WTC11 (cell line): ENCODE measurements at regions of chr3 and their contacts with region 1.

Region 1: DNA sequence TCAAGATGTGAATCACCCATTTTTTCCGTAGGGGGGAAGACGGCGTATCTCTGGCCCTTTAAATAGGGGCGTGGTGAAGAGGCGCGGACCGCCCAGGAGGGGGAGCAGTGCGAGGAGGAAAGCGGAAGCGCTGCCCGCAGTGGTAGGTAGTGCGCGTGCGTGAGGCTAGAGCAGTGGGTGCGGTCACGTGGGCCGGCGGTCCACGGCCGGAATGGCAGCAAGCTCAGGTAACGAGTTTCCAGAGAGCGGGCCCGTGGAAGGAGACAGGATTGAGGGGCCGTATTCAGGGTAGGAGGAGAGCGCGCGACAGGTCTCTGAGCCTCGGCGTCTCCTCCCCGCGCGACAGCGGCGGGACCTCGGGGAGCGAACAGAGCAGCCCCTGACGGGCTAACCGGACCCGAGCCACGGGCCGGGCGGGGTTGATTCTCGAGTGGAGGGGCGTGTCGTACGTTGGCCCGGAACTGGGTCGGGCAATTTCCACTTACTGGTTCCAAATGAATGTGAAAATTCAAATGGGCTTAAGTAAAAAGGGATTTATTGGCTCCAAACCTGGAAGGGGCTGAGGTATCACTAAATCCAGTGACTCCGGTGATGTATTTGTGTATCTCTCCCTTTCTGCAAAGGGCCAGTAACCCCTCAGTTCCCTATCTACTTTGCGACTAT is at the start of gene VPS8:
- DNase-seq: peak; percentile 96
- ATAC-seq: peak; percentile 95
- H3K4me3 Mint-ChIP-seq: peak within 1 kb of the TSS; percentile 99
- H3K27ac Mint-ChIP-seq: peak within 1 kb of the TSS; percentile 89
- H3K4me1 Mint-ChIP-seq: peaks cover 11% of the 10 kb centered on the region
- H3K27me3 Mint-ChIP-seq: no peaks in the 10 kb centered on the region
- CTCF ChIP-seq: peak; percentile 56
- total RNA-seq, gene VPS8: 44.9 to 49.5 TPM (median 46.1 TPM) in 3 replicates

Region 2: GRCh38 chr3:184757022-184757651 is 55.0 kb before region 1 on chr3:
- CTCF ChIA-PET with region 1: no interaction called
- POLR2A ChIA-PET with region 1: no interaction called
- DNase-seq: no peak
- ATAC-seq: peak; percentile 24
- H3K4me3 Mint-ChIP-seq: no peak overlapping the region
- H3K27ac Mint-ChIP-seq: peak overlapping the region; percentile 85
- H3K4me1 Mint-ChIP-seq: peaks cover 54% of the 10 kb centered on the region
- H3K27me3 Mint-ChIP-seq: no peaks in the 10 kb centered on the region
- CTCF ChIP-seq: no peak

Region 3: GRCh38 chr3:184786280-184786941 is 25.7 kb before region 1 on chr3:
- CTCF ChIA-PET with region 1: interaction called, 10 read pairs
- POLR2A ChIA-PET with region 1: no interaction called
- DNase-seq: no peak
- ATAC-seq: no peak
- H3K4me3 Mint-ChIP-seq: no peak overlapping the region
- H3K27ac Mint-ChIP-seq: no peak overlapping the region
- H3K4me1 Mint-ChIP-seq: peaks cover 29% of the 10 kb centered on the region
- H3K27me3 Mint-ChIP-seq: no peaks in the 10 kb centered on the region; the same call in none of the 2 replicates
- CTCF ChIP-seq: no peak

Region 4: DNA sequence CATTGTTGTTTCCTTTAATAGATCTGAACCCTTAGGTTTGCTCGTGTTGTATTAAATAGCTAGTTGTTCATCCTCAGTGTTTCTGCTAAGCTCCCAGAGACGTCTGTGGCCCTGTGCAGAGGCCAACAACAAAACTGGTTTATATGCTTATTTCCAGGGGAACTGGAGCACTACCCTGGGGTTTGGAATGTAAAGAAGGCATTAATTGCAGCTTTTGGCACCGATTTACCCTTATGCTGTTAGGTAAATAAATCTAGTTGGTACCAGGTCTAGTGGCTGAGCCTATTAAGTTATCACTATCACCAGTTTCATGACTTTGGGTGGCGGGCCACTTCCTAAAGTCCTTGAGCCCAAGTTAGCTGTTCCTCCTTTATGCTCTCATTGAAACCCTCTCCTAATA is 11.9 kb after region 1 on chr3:
- CTCF ChIA-PET with region 1: interaction called, 12 read pairs
- POLR2A ChIA-PET with region 1: no interaction called
- DNase-seq: no peak
- ATAC-seq: no peak
- H3K4me3 Mint-ChIP-seq: no peak overlapping the region
- H3K27ac Mint-ChIP-seq: no peak overlapping the region
- H3K4me1 Mint-ChIP-seq: no peaks in the 10 kb centered on the region
- H3K27me3 Mint-ChIP-seq: no peaks in the 10 kb centered on the region
- CTCF ChIP-seq: no peak

Region 5: GRCh38 chr3:184864000-184864399 is 51.9 kb after region 1 on chr3:
- CTCF ChIA-PET with region 1: no interaction called
- POLR2A ChIA-PET with region 1: no interaction called
- DNase-seq: no peak
- ATAC-seq: no peak
- H3K4me3 Mint-ChIP-seq: no peak overlapping the region
- H3K27ac Mint-ChIP-seq: no peak overlapping the region
- H3K4me1 Mint-ChIP-seq: no peaks in the 10 kb centered on the region
- H3K27me3 Mint-ChIP-seq: no peaks in the 10 kb centered on the region
- CTCF ChIP-seq: no peak